Activated CD8-positive, alpha-beta memory T cell treated with anti-CD3 and anti-CD28 coated beads, Interleukin-2, amount 10 ng/mL, durations not matched to agents 7 days and 5 days (primary cell): ENCODE measurements at regions of chr3 and their contacts with region 1.

Region 1: GRCh38 chr3:30751610-30752299 is 142.7 kb downstream of the GADL1 start:
- DNase-seq: peak; percentile 64
- ATAC-seq: peak; percentile 42
- H3K4me3 Mint-ChIP-seq: no peak overlapping the region
- H3K27ac Mint-ChIP-seq: no peak overlapping the region
- H3K4me1 Mint-ChIP-seq: peaks cover 11% of the 10 kb centered on the region
- H3K27me3 Mint-ChIP-seq: peaks cover 3% of the 10 kb centered on the region

Region 2: DNA sequence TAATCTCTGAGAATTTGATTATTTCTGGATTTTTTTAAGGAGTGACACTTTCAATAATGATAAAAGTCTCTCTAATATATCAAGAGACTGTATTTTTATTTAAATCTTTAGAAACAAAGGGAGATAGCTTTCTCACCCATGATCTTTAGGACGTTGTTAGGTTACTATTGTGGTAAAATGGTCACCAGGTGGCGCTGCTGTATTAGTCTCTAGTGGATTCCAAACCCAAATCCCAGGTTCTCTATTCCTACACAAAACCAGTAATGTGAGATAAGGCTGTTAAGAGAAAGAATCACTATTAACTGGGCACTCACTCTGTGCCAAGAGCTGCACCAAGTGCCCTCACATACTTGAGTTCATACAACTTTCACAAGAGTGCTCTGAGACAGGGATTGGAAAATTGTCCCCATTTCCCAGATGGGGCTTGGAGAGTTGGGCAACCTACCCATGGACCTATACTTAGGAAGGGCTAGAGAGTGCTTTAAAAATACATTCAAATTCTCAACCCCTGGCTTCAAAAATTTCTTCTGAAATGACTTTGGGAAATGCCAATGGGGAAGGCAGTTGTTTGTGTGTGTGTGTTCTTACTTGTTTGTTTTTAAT is 738.7 kb before region 1 on chr3:
- CTCF ChIA-PET with region 1: interaction called, 16 read pairs
- DNase-seq: peak; percentile 53
- ATAC-seq: no peak
- H3K4me3 Mint-ChIP-seq: no peak overlapping the region
- H3K27ac Mint-ChIP-seq: no peak overlapping the region
- H3K4me1 Mint-ChIP-seq: peaks cover 3% of the 10 kb centered on the region
- H3K27me3 Mint-ChIP-seq: peaks cover 20% of the 10 kb centered on the region

Region 3: GRCh38 chr3:30042274-30042859 is 709.4 kb before region 1 on chr3:
- CTCF ChIA-PET with region 1: interaction called, 17 read pairs
- DNase-seq: peak; percentile 64
- ATAC-seq: no peak
- H3K4me3 Mint-ChIP-seq: no peak overlapping the region
- H3K27ac Mint-ChIP-seq: no peak overlapping the region
- H3K4me1 Mint-ChIP-seq: no peaks in the 10 kb centered on the region
- H3K27me3 Mint-ChIP-seq: peaks cover 24% of the 10 kb centered on the region

Region 4: DNA sequence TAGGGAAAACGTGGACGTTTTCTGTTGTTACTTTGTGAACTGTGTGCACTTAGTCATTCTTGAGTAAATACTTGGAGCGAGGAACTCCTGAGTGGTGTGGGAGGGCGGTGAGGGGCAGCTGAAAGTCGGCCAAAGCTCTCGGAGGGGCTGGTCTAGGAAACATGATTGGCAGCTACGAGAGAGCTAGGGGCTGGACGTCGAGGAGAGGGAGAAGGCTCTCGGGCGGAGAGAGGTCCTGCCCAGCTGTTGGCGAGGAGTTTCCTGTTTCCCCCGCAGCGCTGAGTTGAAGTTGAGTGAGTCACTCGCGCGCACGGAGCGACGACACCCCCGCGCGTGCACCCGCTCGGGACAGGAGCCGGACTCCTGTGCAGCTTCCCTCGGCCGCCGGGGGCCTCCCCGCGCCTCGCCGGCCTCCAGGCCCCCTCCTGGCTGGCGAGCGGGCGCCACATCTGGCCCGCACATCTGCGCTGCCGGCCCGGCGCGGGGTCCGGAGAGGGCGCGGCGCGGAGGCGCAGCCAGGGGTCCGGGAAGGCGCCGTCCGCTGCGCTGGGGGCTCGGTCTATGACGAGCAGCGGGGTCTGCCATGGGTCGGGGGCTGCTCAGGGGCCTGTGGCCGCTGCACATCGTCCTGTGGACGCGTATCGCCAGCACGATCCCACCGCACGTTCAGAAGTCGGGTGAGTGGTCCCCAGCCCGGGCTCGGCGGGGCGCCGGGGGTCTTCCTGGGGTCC is 145.3 kb before region 1 on chr3 and contains the start of gene TGFBR2:
- CTCF ChIA-PET with region 1: no interaction called
- DNase-seq: peak; percentile 95
- ATAC-seq: peak; percentile 83
- H3K4me3 Mint-ChIP-seq: peak within 1 kb of the TSS; percentile 91
- H3K27ac Mint-ChIP-seq: peak within 1 kb of the TSS; percentile 99
- H3K4me1 Mint-ChIP-seq: peaks cover 53% of the 10 kb centered on the region
- H3K27me3 Mint-ChIP-seq: no peaks in the 10 kb centered on the region
- total RNA-seq, gene TGFBR2: 47.3 to 50.5 TPM